MCF 10A (cell line): ENCODE measurements at regions of chr12 and their contacts with region 1.

Region 1: DNA sequence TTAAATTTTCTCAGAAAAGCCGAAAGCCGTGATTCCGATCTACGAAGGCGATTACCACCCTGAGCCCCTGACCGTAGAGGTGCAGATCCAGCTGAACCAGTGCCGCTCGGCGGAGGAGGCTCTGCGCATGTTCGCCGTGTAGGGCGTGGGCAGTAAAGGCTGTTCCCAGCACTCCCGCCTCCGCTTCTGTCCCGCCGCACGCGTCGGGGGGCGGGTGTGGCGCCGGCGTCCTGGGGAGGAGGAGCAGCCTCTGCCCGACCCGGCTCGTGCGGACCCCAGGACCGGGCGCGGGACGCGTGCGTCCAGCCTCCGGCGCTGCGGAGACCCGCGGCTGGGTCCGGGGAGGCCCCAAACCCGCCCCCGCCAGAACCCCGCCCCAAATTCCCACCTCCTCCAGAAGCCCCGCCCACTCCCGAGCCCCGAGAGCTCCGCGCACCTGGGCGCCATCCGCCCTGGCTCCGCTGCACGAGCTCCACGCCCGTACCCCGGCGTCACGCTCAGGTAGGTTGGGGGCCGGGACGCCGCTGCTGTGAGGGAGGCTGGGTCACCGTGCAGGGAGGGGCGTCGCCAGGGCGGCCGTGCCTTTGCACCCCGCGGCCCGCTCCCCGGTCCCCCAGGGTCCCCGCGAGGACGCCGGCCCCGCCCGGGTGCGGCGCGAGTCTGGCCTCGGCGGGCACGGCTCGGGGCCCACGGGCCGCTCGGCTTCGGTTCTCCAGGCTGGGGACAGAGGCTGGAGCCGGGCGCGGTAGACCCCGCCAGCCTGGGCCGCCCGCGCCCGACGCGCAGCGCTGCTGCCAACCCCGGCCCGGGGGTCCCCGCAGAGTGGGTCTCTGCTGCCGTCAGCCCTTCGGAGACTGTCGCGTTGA is at the start of gene B3GNT4:
- DNase-seq: peak; percentile 62
- H3K4me3 Mint-ChIP-seq: peak within 1 kb of the TSS; percentile 77
- H3K27ac Mint-ChIP-seq: no peak within 1 kb of the TSS
- H3K4me1 Mint-ChIP-seq: peaks cover 6% of the 10 kb centered on the region
- H3K27me3 Mint-ChIP-seq: no peaks in the 10 kb centered on the region
- CTCF ChIP-seq: no peak
- total RNA-seq, gene B3GNT4: 1.5 and 1.8 TPM in 2 replicates

Region 2: DNA sequence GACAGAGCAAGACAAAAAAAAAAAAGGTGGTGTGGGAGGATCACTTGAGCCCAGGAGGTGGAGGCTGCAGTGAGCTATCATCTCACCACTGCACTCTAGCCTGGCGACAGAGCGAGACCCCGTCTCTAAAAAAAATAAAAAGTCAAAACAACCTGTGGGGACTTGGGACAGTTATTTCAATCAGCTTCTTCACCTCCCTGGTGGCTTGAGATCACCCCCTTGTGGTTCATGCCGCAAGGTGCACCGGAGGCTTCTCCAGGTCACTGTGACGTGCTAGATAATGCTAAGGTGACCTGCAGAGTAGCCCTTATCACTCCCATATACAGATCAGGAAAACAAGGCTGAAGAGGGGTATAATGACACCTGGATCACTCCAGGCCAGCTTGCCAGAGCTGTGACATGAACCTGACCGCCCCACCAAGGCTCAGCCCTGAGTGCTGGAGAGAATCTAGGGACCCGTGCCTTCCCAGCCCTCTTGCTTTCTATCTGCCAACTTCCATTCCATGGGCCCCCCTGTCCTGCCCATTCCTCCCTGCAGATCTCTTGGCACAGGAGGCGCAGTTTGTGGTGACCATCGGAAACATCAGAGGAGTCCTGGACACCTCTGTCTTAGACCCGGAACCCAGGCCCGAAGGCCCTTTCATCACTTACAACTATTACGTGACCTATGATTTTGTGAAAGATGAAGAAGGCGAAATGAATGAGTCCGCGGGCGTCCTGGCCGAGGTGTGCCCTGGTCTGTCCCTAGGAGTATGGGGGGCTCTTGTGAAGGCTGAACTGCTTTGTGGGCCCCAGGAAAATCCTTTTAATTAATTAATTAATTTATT is 12.5 kb before region 1 on chr12:
- CTCF ChIA-PET with region 1: interaction called, 10 read pairs
- POLR2A ChIA-PET with region 1: interaction called, 5 read pairs
- intact Hi-C with region 1: no loop called
- DNase-seq: peak; percentile 67
- H3K4me3 Mint-ChIP-seq: no peak overlapping the region
- H3K27ac Mint-ChIP-seq: no peak overlapping the region
- H3K4me1 Mint-ChIP-seq: no peaks in the 10 kb centered on the region
- H3K27me3 Mint-ChIP-seq: no peaks in the 10 kb centered on the region
- CTCF ChIP-seq: peak; percentile 83

Region 3: GRCh38 chr12:122558745-122559641 is 355.5 kb after region 1 on chr12:
- CTCF ChIA-PET with region 1: no interaction called
- POLR2A ChIA-PET with region 1: no interaction called
- intact Hi-C with region 1: no loop called
- DNase-seq: no peak
- H3K4me3 Mint-ChIP-seq: no peak overlapping the region
- H3K27ac Mint-ChIP-seq: no peak overlapping the region
- H3K4me1 Mint-ChIP-seq: no peaks in the 10 kb centered on the region
- H3K27me3 Mint-ChIP-seq: no peaks in the 10 kb centered on the region
- CTCF ChIP-seq: no peak